ENCODE measurements at regions of chr1 and their contacts with region 1.

Region 1: DNA sequence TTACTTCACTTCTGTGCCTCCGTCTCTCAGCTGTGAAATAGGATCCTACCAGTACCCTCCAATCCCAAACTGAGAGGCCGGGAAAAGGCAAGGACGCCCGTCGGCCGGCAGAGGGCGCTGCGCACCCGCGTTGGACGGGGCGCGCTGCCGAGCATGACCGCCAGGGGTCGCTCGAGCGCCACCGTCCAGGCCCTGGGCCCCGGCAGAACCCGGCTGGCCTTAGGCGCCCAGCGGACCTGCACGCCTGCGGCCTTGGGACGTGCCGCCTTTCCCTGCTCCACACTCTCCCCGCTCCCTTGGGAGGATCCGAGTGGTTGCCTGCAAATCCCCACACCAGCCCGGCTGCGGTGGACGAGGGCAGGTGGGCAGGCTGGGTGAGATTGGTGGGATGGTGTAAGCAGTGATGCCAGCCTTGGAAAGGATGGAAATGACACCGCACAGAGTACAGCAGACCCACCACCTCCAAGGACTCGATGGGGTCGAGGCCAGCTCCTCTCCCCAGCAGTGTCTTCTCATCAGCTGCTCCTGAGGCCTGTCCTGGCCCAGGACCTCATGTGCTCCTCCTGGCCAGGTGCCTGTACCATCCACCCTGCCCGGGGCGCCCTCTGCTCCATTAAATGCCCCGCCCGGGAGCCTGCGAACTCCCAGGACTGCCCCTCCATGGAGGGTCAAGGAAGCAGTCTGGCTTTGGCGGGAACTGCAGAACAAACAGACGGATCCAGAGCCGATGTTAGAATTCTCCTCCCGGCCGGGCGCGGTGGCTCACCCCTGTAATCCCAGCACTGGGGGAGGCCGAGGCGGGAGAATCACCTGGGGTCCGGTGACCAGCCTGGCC is 47.4 kb upstream of the LBR start:
- DNase-seq: peak; percentile 84
- ATAC-seq: peak; percentile 92
- H3K4me3 ChIP-seq: no peak overlapping the region
- H3K4me3 Mint-ChIP-seq: no peak overlapping the region
- H3K27ac ChIP-seq: no peak overlapping the region
- H3K27ac Mint-ChIP-seq: peak overlapping the region; percentile 32
- H3K4me1 ChIP-seq: peaks cover 32 to 44% of the 10 kb centered on the region in 2 donors
- H3K4me1 Mint-ChIP-seq: peaks cover 38% of the 10 kb centered on the region
- H3K27me3 ChIP-seq: no peaks in the 10 kb centered on the region
- H3K27me3 Mint-ChIP-seq: no peaks in the 10 kb centered on the region
- CTCF ChIP-seq: peak; percentile 100

Region 2: GRCh38 chr1:225441314-225442122 is 33.7 kb before region 1 on chr1:
- CTCF ChIA-PET with region 1: interaction called, 25 read pairs
- POLR2A ChIA-PET with region 1: no interaction called
- intact Hi-C with region 1: no loop called
- DNase-seq: no peak
- ATAC-seq: no peak
- H3K4me3 ChIP-seq: peak overlapping the region in 1 of 5 experiments; percentile 6
- H3K4me3 Mint-ChIP-seq: peak overlapping the region; percentile 5
- H3K27ac ChIP-seq: peak overlapping the region in 1 of 2 donors; percentile 48
- H3K27ac Mint-ChIP-seq: peak overlapping the region; percentile 38
- H3K4me1 ChIP-seq: peaks cover 42 to 59% of the 10 kb centered on the region in 2 donors
- H3K4me1 Mint-ChIP-seq: peaks cover 56% of the 10 kb centered on the region
- H3K27me3 ChIP-seq: no peaks in the 10 kb centered on the region
- H3K27me3 Mint-ChIP-seq: no peaks in the 10 kb centered on the region
- CTCF ChIP-seq: peak; percentile 22

Region 3: DNA sequence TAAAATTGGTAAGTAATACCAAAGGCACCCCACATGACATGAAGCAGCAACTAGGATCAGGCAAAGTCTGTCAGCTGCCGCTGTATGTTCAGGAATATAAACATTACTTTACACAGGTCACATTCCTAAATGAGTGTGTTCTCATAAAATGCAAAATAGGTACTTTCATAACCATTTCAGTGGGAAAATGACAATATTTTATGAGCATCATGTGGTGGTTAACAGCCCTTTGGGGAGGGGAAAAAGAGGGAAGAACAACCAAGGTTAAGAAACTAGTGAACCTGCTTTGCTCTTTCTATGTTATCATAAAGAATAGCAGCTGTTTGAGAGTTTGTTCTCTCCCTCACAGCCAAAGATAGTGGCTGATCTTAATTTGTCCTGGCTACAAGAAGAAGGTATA is 58.0 kb after region 1 on chr1:
- CTCF ChIA-PET with region 1: no interaction called
- POLR2A ChIA-PET with region 1: no interaction called
- intact Hi-C with region 1: no loop called
- DNase-seq: no peak
- ATAC-seq: no peak
- H3K4me3 ChIP-seq: no peak overlapping the region
- H3K4me3 Mint-ChIP-seq: no peak overlapping the region
- H3K27ac ChIP-seq: no peak overlapping the region
- H3K27ac Mint-ChIP-seq: no peak overlapping the region
- H3K4me1 ChIP-seq: no peaks in the 10 kb centered on the region
- H3K4me1 Mint-ChIP-seq: no peaks in the 10 kb centered on the region
- H3K27me3 ChIP-seq: no peaks in the 10 kb centered on the region
- H3K27me3 Mint-ChIP-seq: peaks cover 14% of the 10 kb centered on the region
- CTCF ChIP-seq: no peak

Region 4: DNA sequence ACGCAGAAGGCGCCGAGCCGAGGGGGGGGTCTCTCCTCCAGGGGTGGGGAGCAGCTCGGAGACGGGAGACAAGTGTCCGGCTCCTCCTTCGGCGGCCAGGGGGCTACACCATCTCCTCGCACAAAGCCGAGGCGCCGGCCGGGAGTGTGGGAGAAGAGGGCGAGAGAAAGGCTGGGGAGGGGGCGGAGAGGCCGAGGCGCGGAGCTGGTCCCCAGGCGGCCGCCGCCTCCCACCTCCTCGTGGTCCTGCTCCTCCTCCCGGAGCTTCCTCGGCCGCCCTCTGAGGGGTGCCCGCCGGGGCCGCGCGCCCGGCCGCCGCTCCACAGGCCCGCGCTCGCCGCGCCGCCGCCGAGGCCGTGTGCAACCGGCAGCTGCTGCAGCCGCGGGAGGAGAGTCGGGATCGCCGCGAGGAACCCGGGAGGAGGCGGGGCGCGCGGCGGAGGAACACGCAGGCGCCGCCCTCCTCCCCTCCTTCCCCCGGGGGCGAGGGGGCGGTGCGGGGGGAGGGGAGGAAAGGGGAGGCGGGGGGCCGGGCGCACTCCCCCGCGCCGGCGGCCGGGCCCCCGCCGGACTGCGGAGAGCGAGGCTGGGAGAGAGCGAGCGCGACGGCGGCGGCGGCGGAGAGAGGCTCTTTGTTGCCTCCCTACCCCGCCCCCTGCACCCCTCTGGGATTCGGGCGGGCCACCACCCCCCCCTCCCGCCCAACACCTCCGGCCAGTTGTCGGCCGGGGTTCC is 177.7 kb after region 1 on chr1 and contains the start of gene ENAH:
- CTCF ChIA-PET with region 1: interaction called, 6 read pairs
- POLR2A ChIA-PET with region 1: no interaction called
- intact Hi-C with region 1: loop called (anchors 5 kb)
- DNase-seq: peak; percentile 58
- ATAC-seq: peak; percentile 82
- H3K4me3 ChIP-seq: peak within 1 kb of the TSS; percentile 57 to 79 (median 71)
- H3K4me3 Mint-ChIP-seq: peak within 1 kb of the TSS; percentile 95
- H3K27ac ChIP-seq: peak within 1 kb of the TSS in 1 of 2 donors; percentile 31
- H3K27ac Mint-ChIP-seq: peak within 1 kb of the TSS; percentile 47
- H3K4me1 ChIP-seq: peaks cover 9 to 19% of the 10 kb centered on the region in 2 donors
- H3K4me1 Mint-ChIP-seq: peaks cover 13% of the 10 kb centered on the region
- H3K27me3 ChIP-seq: peaks cover 0 to 10% (median 6%) of the 10 kb centered on the region in 4 experiments
- H3K27me3 Mint-ChIP-seq: peaks cover 24% of the 10 kb centered on the region
- CTCF ChIP-seq: no peak
- total RNA-seq, gene ENAH: 1.3 and 1.6 TPM in 2 replicates

Region 5: DNA sequence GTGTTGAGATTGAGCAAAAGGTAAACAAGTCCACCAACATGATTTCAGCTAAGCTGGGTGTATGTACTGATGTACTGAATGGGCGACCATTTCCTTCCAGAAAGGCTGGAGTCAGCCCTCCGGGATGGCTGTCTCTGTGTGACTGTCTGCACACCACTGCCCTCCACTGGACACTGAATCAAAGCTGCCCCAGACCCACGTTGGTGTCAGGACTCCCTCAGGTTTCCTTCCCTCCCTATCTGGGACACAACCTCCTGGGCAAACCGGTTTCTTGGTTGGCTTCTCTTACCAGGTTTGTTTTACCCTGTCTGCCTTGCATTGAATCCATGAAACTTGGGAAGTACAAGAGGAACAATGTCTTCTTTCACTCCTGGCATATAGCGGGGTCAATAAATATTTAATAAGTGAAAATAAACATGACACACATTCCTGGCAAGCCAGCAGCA is 297.1 kb after region 1 on chr1:
- CTCF ChIA-PET with region 1: interaction called, 22 read pairs
- POLR2A ChIA-PET with region 1: interaction called, 3 read pairs
- intact Hi-C with region 1: loop called (anchors 1 kb)
- DNase-seq: peak; percentile 51
- ATAC-seq: peak; percentile 60
- H3K4me3 ChIP-seq: no peak overlapping the region
- H3K4me3 Mint-ChIP-seq: no peak overlapping the region
- H3K27ac ChIP-seq: no peak overlapping the region
- H3K27ac Mint-ChIP-seq: no peak overlapping the region
- H3K4me1 ChIP-seq: peaks cover 9 to 10% of the 10 kb centered on the region in 2 donors
- H3K4me1 Mint-ChIP-seq: peaks cover 3% of the 10 kb centered on the region
- H3K27me3 ChIP-seq: no peaks in the 10 kb centered on the region
- H3K27me3 Mint-ChIP-seq: no peaks in the 10 kb centered on the region
- CTCF ChIP-seq: no peak

Region 6: GRCh38 chr1:225845571-225846259 is 370.5 kb after region 1 on chr1:
- CTCF ChIA-PET with region 1: interaction called, 3 read pairs
- POLR2A ChIA-PET with region 1: no interaction called
- intact Hi-C with region 1: loop called (anchors 5 kb)
- DNase-seq: no peak
- ATAC-seq: no peak
- H3K4me3 ChIP-seq: no peak overlapping the region
- H3K4me3 Mint-ChIP-seq: no peak overlapping the region
- H3K27ac ChIP-seq: peak overlapping the region in 1 of 2 donors; percentile 87
- H3K27ac Mint-ChIP-seq: peak overlapping the region; percentile 98
- H3K4me1 ChIP-seq: peaks cover 41 to 47% of the 10 kb centered on the region in 2 donors
- H3K4me1 Mint-ChIP-seq: peaks cover 47% of the 10 kb centered on the region
- H3K27me3 ChIP-seq: no peaks in the 10 kb centered on the region
- H3K27me3 Mint-ChIP-seq: no peaks in the 10 kb centered on the region
- CTCF ChIP-seq: no peak

Region 7: GRCh38 chr1:225987491-225988316 is 512.5 kb after region 1 on chr1:
- CTCF ChIA-PET with region 1: interaction called, 35 read pairs
- POLR2A ChIA-PET with region 1: no interaction called
- intact Hi-C with region 1: no loop called
- DNase-seq: peak; percentile 61
- ATAC-seq: peak; percentile 67
- H3K4me3 ChIP-seq: no peak overlapping the region
- H3K4me3 Mint-ChIP-seq: no peak overlapping the region
- H3K27ac ChIP-seq: no peak overlapping the region
- H3K27ac Mint-ChIP-seq: peak overlapping the region; percentile 37
- H3K4me1 ChIP-seq: peaks cover 0 to 4% of the 10 kb centered on the region in 2 donors
- H3K4me1 Mint-ChIP-seq: peaks cover 25% of the 10 kb centered on the region
- H3K27me3 ChIP-seq: no peaks in the 10 kb centered on the region
- H3K27me3 Mint-ChIP-seq: no peaks in the 10 kb centered on the region
- CTCF ChIP-seq: peak; percentile 87

Measured in B cell (primary cell).